Panc1 (cell line): ENCODE measurements at regions of chr1 and their contacts with region 1.

Region 1: DNA sequence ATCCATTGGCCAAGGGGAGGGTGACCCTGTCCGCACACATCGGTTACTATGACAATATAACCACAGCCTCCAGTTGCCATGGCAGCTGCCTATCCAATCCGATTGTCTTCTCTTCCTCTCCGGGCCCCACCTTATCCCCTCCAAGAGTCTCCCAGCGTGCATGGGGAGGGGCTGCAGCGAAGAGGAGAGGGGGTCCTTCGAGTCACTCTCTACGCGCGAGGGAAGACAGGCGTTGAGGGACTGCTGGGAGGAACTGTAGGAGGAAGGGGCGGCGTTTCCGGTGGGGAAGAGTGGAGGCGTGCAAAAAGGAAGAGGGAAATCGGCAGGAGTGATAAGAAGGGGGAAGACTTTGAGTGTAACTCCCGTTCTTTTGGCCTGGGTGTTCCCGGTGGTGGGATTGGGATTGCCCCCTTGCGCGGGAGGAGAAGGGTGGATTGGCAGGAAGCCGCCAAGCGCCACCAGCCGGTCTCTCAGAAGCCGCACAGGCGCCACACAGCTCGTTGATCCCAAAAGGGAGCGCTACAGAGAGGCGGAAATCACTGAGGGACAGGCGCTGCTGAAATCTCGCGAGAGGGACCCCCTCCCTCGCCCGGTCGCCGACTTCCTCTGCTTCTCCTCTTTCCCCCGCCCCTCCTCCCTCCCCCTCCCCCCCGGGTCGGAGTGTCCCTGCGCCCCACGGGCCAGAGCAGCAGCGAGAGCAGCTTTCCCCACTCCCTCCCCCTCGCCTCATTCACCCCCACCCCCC is 384 bp upstream of the SMG7 start:
- DNase-seq: peak; percentile 90
- ATAC-seq: peak; percentile 86
- H3K4me3 ChIP-seq: peak overlapping the region; percentile 80 to 95
- H3K27ac ChIP-seq: peak overlapping the region; percentile 94
- H3K4me1 ChIP-seq: peaks cover 5% of the 10 kb centered on the region; the same call in 1 of the 2 replicates
- H3K27me3 ChIP-seq: no peaks in the 10 kb centered on the region; the same call in 1 of the 2 replicates
- CTCF ChIP-seq: no peak

Region 2: DNA sequence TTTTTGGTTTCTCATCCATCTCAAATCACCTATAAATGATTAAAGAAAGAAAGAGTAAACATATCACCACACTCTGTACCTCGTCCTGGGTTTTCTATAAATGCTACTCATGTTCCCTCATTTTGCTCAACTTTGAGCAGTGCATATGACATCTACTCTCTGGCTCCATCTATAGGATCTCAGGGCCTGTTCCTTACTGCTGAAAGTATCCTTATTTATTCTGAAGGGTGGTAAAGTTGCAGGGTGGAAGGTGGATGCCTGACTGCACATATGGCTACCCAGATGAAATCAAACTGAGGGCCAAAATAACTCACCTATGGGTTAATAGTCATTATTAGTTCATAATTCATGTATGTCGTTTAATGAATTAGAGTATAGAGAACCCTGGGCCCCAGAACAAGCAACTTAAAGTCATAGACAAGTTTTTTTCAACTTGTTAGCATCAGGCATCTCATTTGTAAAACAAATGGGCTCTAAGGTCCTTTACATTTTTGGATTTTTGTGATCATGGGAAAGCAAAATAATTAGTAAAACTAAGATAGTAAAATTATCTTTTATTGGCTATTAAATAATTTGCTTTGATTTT is 71.8 kb after region 1 on chr1:
- CTCF ChIA-PET with region 1: interaction called, 3 read pairs
- POLR2A ChIA-PET with region 1: no interaction called
- in situ Hi-C with region 1: no loop called
- intact Hi-C with region 1: loop called (anchors 1 kb)
- DNase-seq: peak; percentile 22
- ATAC-seq: peak; percentile 97
- H3K4me3 ChIP-seq: no peak overlapping the region
- H3K27ac ChIP-seq: no peak overlapping the region
- H3K4me1 ChIP-seq: no peaks in the 10 kb centered on the region
- H3K27me3 ChIP-seq: no peaks in the 10 kb centered on the region
- CTCF ChIP-seq: peak; percentile 78

Region 3: DNA sequence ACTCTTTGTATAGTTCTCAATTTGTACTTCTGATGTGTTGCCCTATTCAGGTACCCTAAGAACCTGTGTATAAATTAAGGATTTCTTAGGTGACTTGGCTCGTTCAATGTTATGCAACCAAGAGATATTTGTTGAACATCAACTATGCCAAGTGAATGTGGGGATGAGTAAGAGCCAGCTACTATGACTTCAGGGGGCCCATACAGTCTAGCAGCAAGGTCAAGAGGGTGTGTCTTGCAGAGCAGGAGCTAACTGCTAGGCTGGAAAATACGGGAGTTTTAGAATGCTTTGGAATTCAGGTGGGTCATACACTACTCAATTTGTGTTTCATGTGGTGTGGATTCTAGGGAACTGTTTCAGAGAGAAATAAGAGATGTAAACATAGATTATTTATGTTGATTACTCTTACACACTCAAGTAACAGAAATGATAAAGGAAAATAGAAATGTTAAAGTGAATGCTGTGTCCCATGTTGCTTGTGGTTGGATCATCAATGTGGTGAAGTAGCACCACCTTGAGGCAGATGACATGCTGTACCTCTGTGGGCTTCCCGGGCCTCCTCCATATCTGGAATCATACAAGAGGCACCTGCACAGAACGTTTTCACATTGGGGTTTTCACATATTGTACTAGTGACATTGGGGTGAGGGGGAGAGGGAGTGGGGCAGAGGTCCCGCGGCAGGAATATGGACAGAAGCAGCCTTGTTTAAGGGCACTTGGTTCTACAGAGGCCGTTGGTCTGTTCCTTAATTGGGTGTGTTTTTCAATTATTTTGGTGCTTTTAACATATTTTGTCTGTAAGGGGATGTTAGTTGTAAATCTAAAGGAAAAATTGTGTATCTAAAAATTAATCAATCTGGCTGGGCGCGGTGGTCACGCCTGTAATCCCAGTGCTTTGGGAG is 151.2 kb after region 1 on chr1:
- CTCF ChIA-PET with region 1: no interaction called
- POLR2A ChIA-PET with region 1: no interaction called
- in situ Hi-C with region 1: no loop called
- intact Hi-C with region 1: loop called (anchors 5 kb)
- DNase-seq: no peak
- ATAC-seq: peak; percentile 96
- H3K4me3 ChIP-seq: no peak overlapping the region
- H3K27ac ChIP-seq: no peak overlapping the region
- H3K4me1 ChIP-seq: no peaks in the 10 kb centered on the region
- H3K27me3 ChIP-seq: no peaks in the 10 kb centered on the region
- CTCF ChIP-seq: peak; percentile 77